PC-9 (cell line): ENCODE measurements at regions of chr13 and their contacts with region 1.

Region 1: DNA sequence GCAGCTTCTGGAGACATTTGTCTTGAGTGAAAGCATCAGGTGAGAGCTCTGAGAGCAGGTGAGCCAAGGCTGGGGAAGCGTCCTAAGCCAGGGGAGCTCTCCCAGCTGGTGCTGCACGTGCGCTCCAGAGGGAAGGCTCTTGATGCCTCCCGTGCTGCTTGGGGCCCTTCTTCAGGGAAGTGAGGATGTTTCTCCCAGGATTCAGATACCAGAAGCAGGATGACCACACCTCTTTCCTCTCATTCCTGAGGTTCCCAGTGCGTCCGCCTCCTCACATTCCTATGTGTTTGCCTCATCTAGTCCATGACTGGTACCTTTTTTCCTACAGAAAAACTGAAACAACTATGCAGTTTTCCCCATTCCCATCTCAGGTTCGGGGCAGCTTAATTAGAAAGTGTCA is 231.0 kb upstream of the IRS2 start:
- DNase-seq: peak; percentile 69 to 88
- H3K4me3 ChIP-seq: no peak overlapping the region
- H3K27ac ChIP-seq: peak overlapping the region; percentile 65
- H3K4me1 ChIP-seq: peaks cover 38% of the 10 kb centered on the region
- H3K27me3 ChIP-seq: no peaks in the 10 kb centered on the region
- CTCF ChIP-seq: no peak

Region 2: GRCh38 chr13:109344552-109345157 is 672.7 kb before region 1 on chr13:
- CTCF ChIA-PET with region 1: no interaction called
- POLR2A ChIA-PET with region 1: no interaction called
- intact Hi-C with region 1: loop called (anchors 10 kb)
- DNase-seq: no peak
- H3K4me3 ChIP-seq: no peak overlapping the region
- H3K27ac ChIP-seq: no peak overlapping the region
- H3K4me1 ChIP-seq: peaks cover 32% of the 10 kb centered on the region
- H3K27me3 ChIP-seq: no peaks in the 10 kb centered on the region
- CTCF ChIP-seq: no peak

Region 3: DNA sequence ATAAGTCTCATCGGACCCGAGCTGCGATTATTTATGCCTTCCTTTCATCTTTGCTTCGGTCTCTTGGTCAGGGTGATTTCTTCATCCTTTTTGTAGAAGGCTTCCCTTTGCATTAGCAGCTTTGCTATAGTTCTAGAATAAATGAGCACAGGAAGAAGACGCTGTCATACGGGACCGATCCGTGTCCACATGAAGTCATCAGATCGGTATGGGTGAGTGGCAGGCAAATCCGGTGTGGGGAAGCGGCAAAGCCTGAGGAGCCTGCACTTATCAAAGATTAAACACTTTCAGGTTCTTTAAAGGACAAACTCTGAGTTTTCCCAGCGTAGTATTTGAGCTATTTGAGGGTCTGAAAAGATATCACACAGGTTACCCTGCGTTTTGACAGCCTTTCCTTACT is 350.3 kb before region 1 on chr13:
- CTCF ChIA-PET with region 1: no interaction called
- POLR2A ChIA-PET with region 1: no interaction called
- intact Hi-C with region 1: loop called (anchors 10 kb)
- DNase-seq: peak; percentile 38 to 90
- H3K4me3 ChIP-seq: peak overlapping the region; percentile 52
- H3K27ac ChIP-seq: peak overlapping the region; percentile 94
- H3K4me1 ChIP-seq: peaks cover 66% of the 10 kb centered on the region
- H3K27me3 ChIP-seq: no peaks in the 10 kb centered on the region
- CTCF ChIP-seq: no peak